HCT116 (cell line): ENCODE measurements at regions of chr18 and their contacts with region 1.

Region 1: DNA sequence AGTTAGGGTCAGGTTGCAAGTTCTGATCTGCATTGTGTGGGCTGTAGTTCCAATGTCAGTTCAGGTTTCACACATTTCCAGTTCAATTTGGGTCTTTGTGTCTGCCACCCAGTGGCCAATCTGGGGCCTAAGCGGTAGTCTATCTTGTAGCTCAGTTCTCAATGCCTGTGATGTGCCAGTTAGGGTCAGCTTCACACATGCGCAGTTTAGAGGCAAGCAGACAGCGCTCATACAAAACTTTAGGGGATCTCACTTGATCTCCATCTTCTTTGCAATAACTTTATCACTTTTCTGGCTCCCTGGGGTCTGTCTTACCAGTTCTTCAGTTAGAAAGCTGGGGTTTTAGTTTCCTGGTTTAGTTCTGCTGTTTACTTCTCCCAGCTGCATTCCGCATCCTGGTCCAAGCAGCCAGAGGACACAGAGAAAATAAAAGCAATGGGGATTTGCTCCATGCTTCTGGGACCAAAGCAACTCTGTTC is 11.0 kb upstream of the ZNF24 start:
- DNase-seq: peak; percentile 81
- ATAC-seq: peak; percentile 100
- H3K4me3 ChIP-seq: peak overlapping the region; percentile 8 to 37; a peak in 2 of 4 replicates
- H3K27ac ChIP-seq: no peak overlapping the region
- H3K4me1 ChIP-seq: peaks cover 0 to 3% of the 10 kb centered on the region in 2 experiments; a peak in 1 of 4 replicates
- H3K27me3 ChIP-seq: no peaks in the 10 kb centered on the region
- CTCF ChIP-seq: peak; percentile 68 to 82 (median 80)
- POLR2A ChIP-seq: no peak
- RAD21 ChIP-seq: peak; percentile 63

Region 2: GRCh38 chr18:35005963-35006577 is 349.1 kb before region 1 on chr18:
- CTCF ChIA-PET with region 1: no interaction called
- POLR2A ChIA-PET with region 1: no interaction called
- RAD21 ChIA-PET with region 1: no interaction called
- intact Hi-C with region 1: loop called (anchors 1 kb)
- DNase-seq: peak; percentile 71
- ATAC-seq: peak; percentile 97
- H3K4me3 ChIP-seq: no peak overlapping the region
- H3K27ac ChIP-seq: no peak overlapping the region
- H3K4me1 ChIP-seq: peaks cover 0 to 5% of the 10 kb centered on the region in 2 experiments; a peak in 1 of 4 replicates
- H3K27me3 ChIP-seq: no peaks in the 10 kb centered on the region
- CTCF ChIP-seq: peak; percentile 55 to 73 (median 66)
- POLR2A ChIP-seq: no peak
- RAD21 ChIP-seq: peak; percentile 82

Region 3: GRCh38 chr18:35231052-35231451 is 124.1 kb before region 1 on chr18:
- CTCF ChIA-PET with region 1: interaction called, 23 read pairs
- POLR2A ChIA-PET with region 1: no interaction called
- RAD21 ChIA-PET with region 1: no interaction called
- intact Hi-C with region 1: no loop called
- DNase-seq: peak; percentile 82
- ATAC-seq: peak; percentile 94
- H3K4me3 ChIP-seq: peak overlapping the region; percentile 16 to 21; a peak in 2 of 4 replicates
- H3K27ac ChIP-seq: no peak overlapping the region
- H3K4me1 ChIP-seq: no peaks in the 10 kb centered on the region
- H3K27me3 ChIP-seq: no peaks in the 10 kb centered on the region
- CTCF ChIP-seq: peak; percentile 80 to 91 (median 88)
- POLR2A ChIP-seq: no peak
- RAD21 ChIP-seq: peak; percentile 87